ENCODE measurements at regions of chr10 and their contacts with region 1.

Region 1: GRCh38 chr10:122407375-122408125 is 33.0 kb downstream of the PLEKHA1 start:
- DNase-seq: no peak
- H3K4me3 Mint-ChIP-seq: no peak overlapping the region
- H3K27ac Mint-ChIP-seq: no peak overlapping the region
- H3K4me1 Mint-ChIP-seq: peaks cover 14% of the 10 kb centered on the region
- H3K27me3 Mint-ChIP-seq: peaks cover 8% of the 10 kb centered on the region

Region 2: GRCh38 chr10:122089311-122090017 is 318.1 kb before region 1 on chr10:
- intact Hi-C with region 1: no loop called
- DNase-seq: no peak
- H3K4me3 Mint-ChIP-seq: no peak overlapping the region
- H3K27ac Mint-ChIP-seq: no peak overlapping the region
- H3K4me1 Mint-ChIP-seq: no peaks in the 10 kb centered on the region
- H3K27me3 Mint-ChIP-seq: no peaks in the 10 kb centered on the region

Region 3: GRCh38 chr10:122388287-122388997 is 19.1 kb before region 1 on chr10:
- intact Hi-C with region 1: loop called (anchors 2 kb)
- DNase-seq: no peak
- H3K4me3 Mint-ChIP-seq: no peak overlapping the region
- H3K27ac Mint-ChIP-seq: no peak overlapping the region
- H3K4me1 Mint-ChIP-seq: peaks cover 10% of the 10 kb centered on the region
- H3K27me3 Mint-ChIP-seq: peaks cover 35% of the 10 kb centered on the region

Region 4: GRCh38 chr10:122419876-122420623 is 12.5 kb after region 1 on chr10:
- intact Hi-C with region 1: loop called (anchors 1 kb)
- DNase-seq: no peak
- H3K4me3 Mint-ChIP-seq: no peak overlapping the region
- H3K27ac Mint-ChIP-seq: no peak overlapping the region
- H3K4me1 Mint-ChIP-seq: peaks cover 41% of the 10 kb centered on the region
- H3K27me3 Mint-ChIP-seq: no peaks in the 10 kb centered on the region

Measured in activated T-helper 1 cell treated with anti-CD3 and anti-CD28 coated beads, Interleukin-12 subunit alpha, Interleukin-12 subunit beta, Interleukin-2, Interleukin-4 antibody, amounts not matched to agents 30 ng/mL and 10 ng/mL and 1 ng/mL, durations not matched to agents 14 hours and 24 hours and 36 hours (primary cell).